AG04449 (cell line): ENCODE measurements at regions of chr12 and their contacts with region 1.

Region 1: DNA sequence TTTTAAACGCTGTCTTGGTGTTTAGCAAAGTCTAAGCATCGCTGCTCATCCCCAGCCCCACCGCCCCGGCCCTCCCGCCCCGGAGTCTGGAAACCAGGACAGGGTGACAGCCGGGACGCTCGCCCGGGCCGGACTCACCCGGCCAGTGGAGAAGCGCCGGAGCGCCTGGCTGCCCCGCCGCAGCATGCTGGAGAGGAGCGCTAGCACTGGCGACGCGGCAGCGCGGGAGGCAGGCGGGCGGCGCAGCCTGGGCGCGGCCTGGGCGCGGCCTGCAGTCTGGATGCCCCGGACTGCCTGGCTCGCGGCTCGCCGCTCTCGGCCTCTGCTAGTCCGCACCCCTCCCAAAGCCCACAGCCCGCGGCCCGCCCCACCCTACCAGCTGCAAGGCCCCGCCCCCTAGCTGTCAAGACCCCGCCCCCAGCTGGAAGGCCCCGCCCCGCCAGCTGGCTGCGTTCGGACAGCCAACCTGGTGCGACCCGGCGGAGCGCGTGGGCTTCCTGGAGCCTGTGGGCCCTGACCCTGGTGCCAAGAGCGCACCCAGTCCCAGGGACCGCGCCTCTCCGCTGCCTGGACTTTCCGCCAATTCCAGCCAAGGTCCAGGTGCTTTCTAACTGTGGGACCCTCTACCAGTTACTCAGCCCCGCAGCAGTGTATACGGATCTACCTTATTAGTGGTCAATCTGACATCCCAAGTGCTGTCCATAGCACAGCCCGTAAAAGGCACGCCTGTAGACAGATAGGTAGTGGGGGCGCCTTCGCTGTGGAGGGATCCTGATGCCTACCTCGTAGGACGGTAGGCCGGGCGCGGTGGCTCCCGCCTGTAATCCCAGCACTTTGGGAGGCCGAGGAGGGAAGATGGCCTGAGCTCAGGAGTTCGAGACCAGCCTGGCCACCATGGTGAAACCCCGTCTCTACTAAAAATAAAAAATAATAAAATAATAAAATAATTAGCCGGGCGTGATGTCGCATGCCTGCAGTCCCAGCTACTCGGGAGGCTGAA is at the start of gene ALDH1L2:
- DNase-seq: no peak
- H3K4me3 ChIP-seq: peak within 1 kb of the TSS; percentile 97
- CTCF ChIP-seq: no peak

Region 2: GRCh38 chr12:105107494-105108371 is 23.2 kb after region 1 on chr12 and contains the start of gene WASHC4:
- CTCF ChIA-PET with region 1: no interaction called
- POLR2A ChIA-PET with region 1: interaction called, 14 read pairs
- DNase-seq: no peak
- H3K4me3 ChIP-seq: peak within 1 kb of the TSS; percentile 99
- CTCF ChIP-seq: no peak

Region 3: DNA sequence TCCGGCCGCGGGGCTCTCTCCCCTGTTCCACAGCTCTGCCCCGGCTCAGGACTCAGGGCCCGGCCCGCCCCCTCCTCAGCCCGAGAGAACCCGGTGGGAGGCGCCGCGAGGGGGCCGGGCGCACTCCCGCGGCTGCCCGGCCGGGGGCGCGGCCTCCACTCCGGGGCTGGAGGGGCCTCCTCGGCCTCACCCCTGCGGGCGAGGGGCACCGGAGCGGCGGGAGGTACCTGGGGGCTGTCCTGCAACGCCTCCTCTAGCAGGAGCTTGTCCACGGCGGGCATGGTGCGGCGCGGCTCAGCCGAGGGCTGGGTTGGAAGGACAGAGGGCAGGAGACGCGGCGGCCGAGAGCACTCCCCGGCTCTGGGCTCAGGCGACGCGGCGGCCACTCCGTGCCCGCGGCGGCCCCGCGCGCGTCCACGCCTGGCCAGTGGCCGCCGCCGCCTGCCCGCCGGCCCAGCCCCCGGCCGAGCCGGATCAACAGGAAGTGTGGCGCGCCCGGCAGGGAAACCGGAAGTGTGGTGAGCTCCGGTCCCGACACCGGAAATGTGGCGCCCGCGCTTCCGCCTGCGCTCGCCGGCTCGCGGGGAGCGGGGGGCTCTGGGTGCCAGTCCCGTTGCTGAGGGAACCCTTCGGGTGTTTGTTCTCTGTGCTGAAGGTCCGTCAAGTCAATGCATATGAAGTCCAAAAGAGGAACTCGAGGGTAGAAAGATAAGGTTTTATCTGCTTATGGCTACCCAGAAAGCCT is 151.4 kb after region 1 on chr12 and contains the start of gene APPL2:
- CTCF ChIA-PET with region 1: no interaction called
- POLR2A ChIA-PET with region 1: no interaction called
- DNase-seq: no peak
- H3K4me3 ChIP-seq: peak within 1 kb of the TSS; percentile 78
- CTCF ChIP-seq: no peak